CD4-positive, alpha-beta memory T cell (primary cell): ENCODE measurements at regions of chr6 and their contacts with region 1.

Region 1: GRCh38 chr6:14144678-14145113 is 27.1 kb downstream of the CD83 start:
- DNase-seq: peak; percentile 59 to 69 (median 64)
- H3K4me3 ChIP-seq: no peak overlapping the region
- H3K4me3 Mint-ChIP-seq: no peak overlapping the region
- H3K27ac ChIP-seq: no peak overlapping the region
- H3K27ac Mint-ChIP-seq: no peak overlapping the region
- H3K4me1 ChIP-seq: no peaks in the 10 kb centered on the region
- H3K4me1 Mint-ChIP-seq: peaks cover 0 to 5% (median under 1%) of the 10 kb centered on the region in 4 donors
- H3K27me3 ChIP-seq: no peaks in the 10 kb centered on the region
- H3K27me3 Mint-ChIP-seq: no peaks in the 10 kb centered on the region

Region 2: GRCh38 chr6:13089296-13089994 is 1055.3 kb before region 1 on chr6:
- CTCF ChIA-PET with region 1: no interaction called
- POLR2A ChIA-PET with region 1: no interaction called
- intact Hi-C with region 1: no loop called
- DNase-seq: no peak
- H3K4me3 ChIP-seq: no peak overlapping the region
- H3K4me3 Mint-ChIP-seq: no peak overlapping the region
- H3K27ac ChIP-seq: no peak overlapping the region
- H3K27ac Mint-ChIP-seq: no peak overlapping the region
- H3K4me1 ChIP-seq: no peaks in the 10 kb centered on the region
- H3K4me1 Mint-ChIP-seq: no peaks in the 10 kb centered on the region
- H3K27me3 ChIP-seq: peaks cover 5% of the 10 kb centered on the region
- H3K27me3 Mint-ChIP-seq: peaks cover 0 to 2% of the 10 kb centered on the region in 2 donors

Region 3: DNA sequence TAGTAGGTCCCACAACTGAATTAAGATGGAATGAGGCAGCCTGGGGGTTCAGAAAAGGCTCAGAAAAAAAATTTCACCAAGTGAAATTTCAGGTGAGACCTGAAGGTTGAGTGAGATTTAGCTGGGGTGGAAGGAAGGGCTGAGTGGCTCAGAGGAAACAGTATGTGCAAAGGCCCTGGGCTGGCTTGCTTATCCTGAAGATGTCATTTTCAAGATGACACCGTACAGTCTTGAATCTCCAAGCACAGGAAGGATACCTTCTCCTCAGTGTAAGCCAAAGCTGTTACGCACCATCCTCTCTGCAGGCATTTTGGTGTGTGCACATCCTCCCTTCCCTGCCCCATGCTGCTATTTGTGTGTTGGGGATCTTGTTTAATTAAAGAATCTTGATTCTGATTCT is 390.1 kb before region 1 on chr6:
- CTCF ChIA-PET with region 1: no interaction called
- POLR2A ChIA-PET with region 1: no interaction called
- intact Hi-C with region 1: no loop called
- DNase-seq: no peak
- H3K4me3 ChIP-seq: no peak overlapping the region
- H3K4me3 Mint-ChIP-seq: no peak overlapping the region
- H3K27ac ChIP-seq: no peak overlapping the region
- H3K27ac Mint-ChIP-seq: no peak overlapping the region
- H3K4me1 ChIP-seq: no peaks in the 10 kb centered on the region
- H3K4me1 Mint-ChIP-seq: peaks cover 0 to 7% (median 2%) of the 10 kb centered on the region in 4 donors
- H3K27me3 ChIP-seq: no peaks in the 10 kb centered on the region
- H3K27me3 Mint-ChIP-seq: no peaks in the 10 kb centered on the region

Region 4: DNA sequence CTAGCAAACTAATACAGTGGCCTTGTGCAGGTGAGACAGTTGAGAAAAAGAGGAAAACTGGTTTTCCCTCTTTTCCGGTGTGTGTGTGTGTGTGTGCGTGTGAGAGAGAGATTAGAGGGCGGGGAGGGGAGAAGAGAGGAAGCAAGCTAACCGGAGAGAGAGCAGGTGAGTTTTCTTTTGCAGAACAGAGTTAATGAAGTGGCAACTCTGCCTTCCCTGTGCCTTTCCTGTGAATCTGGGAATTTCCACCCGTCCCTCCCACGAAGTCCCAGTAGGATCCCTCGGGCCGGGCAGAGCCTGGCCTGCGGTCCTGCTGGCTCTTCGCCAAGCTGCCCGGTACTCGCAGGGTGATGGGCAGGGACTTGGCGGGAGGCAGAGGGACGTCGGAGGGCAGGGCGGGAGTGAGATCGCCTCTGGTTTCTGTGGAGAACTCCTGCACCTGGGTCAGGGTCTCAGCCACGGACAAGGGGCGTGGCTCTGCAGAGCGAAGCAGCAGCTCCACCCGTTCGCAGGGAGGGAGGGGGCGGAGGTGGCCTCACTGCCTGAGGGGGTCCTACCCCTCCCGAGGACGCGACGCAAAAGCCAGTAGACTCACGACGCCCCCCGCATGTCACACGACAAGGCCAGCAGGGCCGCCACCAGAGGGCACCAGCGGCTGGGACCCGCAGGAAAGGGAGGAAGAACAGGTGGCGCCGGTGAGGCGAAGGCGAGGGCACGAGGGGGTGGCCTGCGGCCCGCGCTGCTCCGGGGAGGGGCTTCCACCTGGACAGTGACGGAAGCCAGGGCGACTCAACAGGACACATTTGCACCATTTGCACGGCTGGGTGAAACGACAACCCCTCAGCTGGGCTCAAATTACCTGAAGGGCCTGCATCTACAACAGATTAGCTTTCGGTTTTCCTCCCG is 271.2 kb before region 1 on chr6:
- CTCF ChIA-PET with region 1: interaction called, 7 read pairs
- POLR2A ChIA-PET with region 1: no interaction called
- intact Hi-C with region 1: loop called (anchors 1 kb)
- DNase-seq: peak; percentile 52 to 64 (median 56)
- H3K4me3 ChIP-seq: peak overlapping the region; percentile 15 to 60
- H3K4me3 Mint-ChIP-seq: peak overlapping the region; percentile 75 to 93 (median 88)
- H3K27ac ChIP-seq: no peak overlapping the region
- H3K27ac Mint-ChIP-seq: peak overlapping the region in 5 of 7 donors; percentile 11 to 69 (median 65)
- H3K4me1 ChIP-seq: peaks cover 13% of the 10 kb centered on the region
- H3K4me1 Mint-ChIP-seq: peaks cover 8 to 18% (median 9%) of the 10 kb centered on the region in 4 donors
- H3K27me3 ChIP-seq: no peaks in the 10 kb centered on the region
- H3K27me3 Mint-ChIP-seq: peaks cover 4 to 9% of the 10 kb centered on the region in 2 donors

Region 5: GRCh38 chr6:13914351-13914750 is 230.3 kb before region 1 on chr6:
- CTCF ChIA-PET with region 1: interaction called, 66 read pairs
- POLR2A ChIA-PET with region 1: no interaction called
- intact Hi-C with region 1: no loop called
- DNase-seq: no peak
- H3K4me3 ChIP-seq: no peak overlapping the region
- H3K4me3 Mint-ChIP-seq: no peak overlapping the region
- H3K27ac ChIP-seq: no peak overlapping the region
- H3K27ac Mint-ChIP-seq: no peak overlapping the region
- H3K4me1 ChIP-seq: no peaks in the 10 kb centered on the region
- H3K4me1 Mint-ChIP-seq: no peaks in the 10 kb centered on the region
- H3K27me3 ChIP-seq: no peaks in the 10 kb centered on the region
- H3K27me3 Mint-ChIP-seq: peaks cover 16 to 35% of the 10 kb centered on the region in 2 donors

Region 6: GRCh38 chr6:14129575-14129974 is 15.1 kb before region 1 on chr6:
- CTCF ChIA-PET with region 1: interaction called, 72 read pairs
- POLR2A ChIA-PET with region 1: no interaction called
- intact Hi-C with region 1: no loop called
- DNase-seq: peak in 2 of 5 donors; percentile 11 to 16
- H3K4me3 ChIP-seq: no peak overlapping the region
- H3K4me3 Mint-ChIP-seq: no peak overlapping the region
- H3K27ac ChIP-seq: no peak overlapping the region
- H3K27ac Mint-ChIP-seq: peak overlapping the region in 1 of 7 donors; percentile 9
- H3K4me1 ChIP-seq: peaks cover 4% of the 10 kb centered on the region
- H3K4me1 Mint-ChIP-seq: peaks cover 7 to 40% (median 26%) of the 10 kb centered on the region in 4 donors
- H3K27me3 ChIP-seq: no peaks in the 10 kb centered on the region
- H3K27me3 Mint-ChIP-seq: no peaks in the 10 kb centered on the region